Heart left ventricle (tissue), 16 donors: ENCODE measurements at regions of chr19 and their contacts with region 1.

Region 1: DNA sequence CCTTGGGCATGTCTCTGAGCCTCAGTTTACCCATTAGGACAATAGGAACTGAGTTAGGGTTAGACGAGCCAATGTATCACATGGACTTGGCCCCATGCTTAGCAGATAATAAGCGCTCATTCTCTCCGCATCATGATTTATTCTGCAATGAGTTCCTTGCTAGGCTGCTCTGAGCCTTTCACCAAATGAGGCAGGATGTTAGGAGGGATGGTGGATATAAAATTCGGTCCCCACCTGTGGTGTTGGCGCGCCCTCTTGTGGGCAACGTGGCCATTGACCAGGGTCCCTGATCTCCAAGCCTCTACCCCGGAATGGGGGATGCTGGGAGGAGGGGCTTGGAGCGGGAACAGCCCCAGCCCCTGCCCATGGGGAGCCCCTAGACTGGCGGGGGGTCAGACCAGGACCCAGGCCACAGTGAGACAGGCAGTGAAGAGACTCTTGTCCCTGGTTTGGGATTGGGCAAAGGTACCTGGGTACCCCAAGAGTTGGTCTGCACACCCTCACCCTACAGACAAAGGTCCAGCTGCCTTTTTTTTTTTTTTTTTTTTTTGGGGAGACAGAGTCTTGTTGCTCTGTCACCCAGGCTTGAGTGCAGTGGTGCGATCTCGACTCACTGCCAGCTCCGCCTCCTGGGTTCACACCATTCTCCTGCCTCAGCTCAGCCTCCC is 43.9 kb downstream of the CERS4 start:
- DNase-seq: peak; percentile 75 to 92 (median 81)
- ATAC-seq: peak in 3 of 4 donors; percentile 57 to 60 (median 59)
- H3K4me3 ChIP-seq: no peak overlapping the region
- H3K27ac ChIP-seq: no peak overlapping the region
- H3K4me1 ChIP-seq: peaks cover 0 to 18% (median 5%) of the 10 kb centered on the region in 12 donors
- H3K27me3 ChIP-seq: no peaks in the 10 kb centered on the region
- CTCF ChIP-seq: peak; percentile 90 to 98 (median 94)
- POLR2A ChIP-seq: no peak

Region 2: GRCh38 chr19:7652061-7652641 is 600.9 kb before region 1 on chr19:
- intact Hi-C with region 1: loop called in 1 of 10 experiments (anchors 5 kb)
- DNase-seq: peak; percentile 74 to 92 (median 80)
- ATAC-seq: peak; percentile 58 to 88 (median 82)
- H3K4me3 ChIP-seq: peak overlapping the region in 9 of 12 donors; percentile 16 to 42 (median 25)
- H3K27ac ChIP-seq: peak overlapping the region in 2 of 12 donors; percentile 23 to 51
- H3K4me1 ChIP-seq: peaks cover 0 to 18% (median 0%) of the 10 kb centered on the region in 12 donors
- H3K27me3 ChIP-seq: peaks cover 0 to 6% (median 0%) of the 10 kb centered on the region in 9 donors
- CTCF ChIP-seq: peak; percentile 96 to 99 (median 98)
- POLR2A ChIP-seq: no peak

Region 3: DNA sequence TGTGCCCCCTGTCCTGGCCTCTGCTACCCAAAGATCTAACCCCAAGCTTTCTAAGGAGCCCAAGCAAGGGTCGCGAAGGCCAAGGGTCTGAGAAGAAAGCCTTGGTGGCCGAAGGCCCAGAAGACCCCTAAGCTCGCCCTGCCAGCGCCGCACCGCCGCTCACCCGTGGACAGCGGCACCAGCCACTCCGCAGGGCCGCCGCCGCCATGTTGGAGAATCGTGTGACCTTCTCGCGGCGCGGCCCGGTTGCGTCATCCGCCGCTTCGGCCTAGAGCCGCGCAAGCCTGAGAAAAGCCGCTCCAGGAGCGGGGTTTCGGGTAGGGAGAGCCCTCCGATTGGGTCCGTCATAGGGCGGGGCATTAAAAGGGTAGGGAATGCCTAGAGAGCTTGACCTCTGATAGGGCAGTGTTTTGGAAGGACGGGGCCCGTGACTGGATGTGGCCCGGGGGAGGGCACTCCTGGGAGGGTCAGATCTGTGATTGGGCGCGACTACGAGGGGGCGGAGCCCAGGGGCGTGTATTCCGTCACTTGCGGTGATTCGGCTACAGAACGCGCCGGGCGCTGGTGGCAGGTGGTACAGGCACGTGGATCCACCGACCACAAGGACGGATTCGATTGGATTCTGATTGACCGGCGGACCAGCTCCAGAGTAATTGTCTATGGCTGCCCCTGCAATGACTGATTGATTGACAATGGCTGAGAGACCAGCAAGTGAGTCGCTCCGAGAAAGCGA is 309.4 kb before region 1 on chr19 and contains the start of gene TIMM44:
- intact Hi-C with region 1: loop called in 9 of 10 experiments (anchors 1 to 5 kb)
- DNase-seq: peak; percentile 99 to 100 (median 100)
- ATAC-seq: peak; percentile 98 to 100 (median 99)
- H3K4me3 ChIP-seq: peak within 1 kb of the TSS; percentile 52 to 100 (median 86)
- H3K27ac ChIP-seq: peak within 1 kb of the TSS; percentile 83 to 99 (median 94)
- H3K4me1 ChIP-seq: peaks cover 0 to 25% (median 15%) of the 10 kb centered on the region in 12 donors
- H3K27me3 ChIP-seq: no peaks in the 10 kb centered on the region
- CTCF ChIP-seq: peak in 1 of 12 donors; percentile 8
- POLR2A ChIP-seq: peak in 1 of 2 donors; percentile 85
- total RNA-seq, gene TIMM44: 55.9 to 99.9 (median 70.6) TPM

Region 4: DNA sequence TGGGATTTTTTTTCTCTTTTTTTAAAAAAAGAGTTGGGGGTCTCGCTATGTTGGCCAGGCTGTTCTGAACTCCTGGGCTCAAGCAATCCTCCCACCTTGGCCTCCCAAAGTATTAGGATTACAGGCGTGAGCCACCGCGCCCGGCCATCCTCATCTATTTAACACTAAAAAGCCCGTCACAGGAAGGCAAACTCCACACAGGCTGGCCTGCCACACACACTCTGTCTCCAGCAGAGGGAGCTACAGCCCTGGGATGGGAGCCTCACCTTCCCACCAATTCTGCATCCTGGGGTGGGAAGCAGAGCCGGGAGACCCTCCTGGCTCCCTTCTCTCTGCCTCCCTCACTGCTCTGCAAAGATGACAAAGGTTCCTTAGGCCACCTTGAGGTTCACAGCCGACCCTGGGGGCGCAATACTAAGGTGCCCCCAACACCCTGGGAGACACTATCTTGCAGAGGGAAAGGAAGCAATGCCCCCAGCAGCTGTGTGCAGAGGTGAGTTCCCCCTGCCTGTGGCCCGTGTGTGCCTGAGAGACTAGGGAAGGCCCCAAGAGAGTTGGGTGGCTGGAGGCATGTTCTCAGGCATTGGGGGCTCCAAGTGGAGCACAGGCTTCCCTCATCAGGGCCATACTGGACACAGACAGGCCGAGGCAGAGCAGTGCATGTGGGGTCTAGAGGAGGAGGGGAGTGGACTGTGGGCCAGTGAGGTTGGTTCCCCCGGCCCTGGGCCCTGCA is 282.2 kb before region 1 on chr19:
- intact Hi-C with region 1: loop called in 2 of 10 experiments (anchors 5 to 10 kb)
- DNase-seq: peak in 1 of 5 donors; percentile 48
- ATAC-seq: no peak
- H3K4me3 ChIP-seq: no peak overlapping the region
- H3K27ac ChIP-seq: no peak overlapping the region
- H3K4me1 ChIP-seq: peaks cover 0 to 30% (median 8%) of the 10 kb centered on the region in 12 donors
- H3K27me3 ChIP-seq: no peaks in the 10 kb centered on the region
- CTCF ChIP-seq: peak; percentile 57 to 78 (median 66)
- POLR2A ChIP-seq: no peak

Region 5: DNA sequence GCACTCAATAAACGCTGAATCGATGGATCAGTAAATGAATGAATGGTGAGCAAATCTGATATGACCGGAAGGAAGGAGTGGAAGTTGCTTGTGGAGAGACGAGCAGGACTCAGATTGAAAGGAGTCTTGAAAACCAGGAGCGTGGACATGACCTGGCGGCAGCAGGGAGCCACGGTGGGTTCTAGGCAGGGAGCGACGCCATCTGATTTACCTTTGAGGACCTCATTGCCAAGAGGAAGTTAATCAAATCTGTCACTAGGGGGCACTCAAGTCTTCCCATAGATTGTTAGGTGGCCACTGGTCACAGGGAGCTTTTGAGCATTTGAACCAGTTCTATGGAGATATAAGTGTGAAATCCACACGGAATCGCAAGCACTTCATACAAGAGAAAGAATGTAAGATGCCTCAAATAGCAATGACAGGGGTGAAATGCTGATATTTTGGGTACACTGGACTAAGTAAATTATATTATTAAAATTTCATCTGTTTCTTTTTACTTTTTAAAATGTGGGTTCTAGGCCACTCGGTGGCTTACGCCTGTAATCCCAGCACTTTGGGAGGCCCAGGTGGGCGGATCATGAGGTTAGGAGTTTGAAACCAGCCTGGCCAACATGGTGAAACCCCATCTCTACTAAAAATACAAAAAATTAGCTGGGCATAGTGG is 94.5 kb before region 1 on chr19:
- intact Hi-C with region 1: loop called (anchors 1 to 2 kb)
- DNase-seq: peak in 4 of 5 donors; percentile 42 to 61 (median 50)
- ATAC-seq: peak; percentile 40 to 67 (median 60)
- H3K4me3 ChIP-seq: no peak overlapping the region
- H3K27ac ChIP-seq: no peak overlapping the region
- H3K4me1 ChIP-seq: peaks cover 0 to 15% (median 9%) of the 10 kb centered on the region in 12 donors
- H3K27me3 ChIP-seq: no peaks in the 10 kb centered on the region
- CTCF ChIP-seq: peak; percentile 59 to 81 (median 75)
- POLR2A ChIP-seq: no peak

Region 6: DNA sequence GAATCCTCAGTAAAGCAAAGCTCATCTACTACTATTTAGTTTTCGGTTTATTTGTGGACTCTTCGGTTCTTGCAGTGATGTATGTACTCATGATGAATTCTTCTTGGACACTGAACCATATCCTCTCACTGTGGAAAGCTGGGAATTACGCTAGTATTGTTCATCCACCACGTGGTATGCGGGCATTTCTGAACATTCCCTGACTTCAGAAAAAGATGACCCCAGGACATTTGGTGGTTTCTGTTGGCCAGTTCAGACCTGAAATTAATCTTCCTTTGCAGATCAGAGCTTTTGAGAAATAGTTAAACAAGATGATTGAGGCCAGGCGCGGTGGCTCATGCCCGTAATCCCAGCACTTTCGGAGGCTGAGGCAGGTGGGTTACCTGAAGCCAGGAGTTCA is 78.3 kb before region 1 on chr19:
- intact Hi-C with region 1: no loop called
- DNase-seq: no peak
- ATAC-seq: no peak
- H3K4me3 ChIP-seq: no peak overlapping the region
- H3K27ac ChIP-seq: no peak overlapping the region
- H3K4me1 ChIP-seq: no peaks in the 10 kb centered on the region
- H3K27me3 ChIP-seq: no peaks in the 10 kb centered on the region
- CTCF ChIP-seq: no peak
- POLR2A ChIP-seq: no peak

Region 7: GRCh38 chr19:8240274-8241229 is 12.5 kb before region 1 on chr19:
- intact Hi-C with region 1: loop called in 1 of 10 experiments (anchors 1 kb)
- DNase-seq: peak; percentile 88 to 95 (median 92)
- ATAC-seq: peak; percentile 87 to 92 (median 90)
- H3K4me3 ChIP-seq: peak overlapping the region in 8 of 12 donors; percentile 5 to 38 (median 22)
- H3K27ac ChIP-seq: peak overlapping the region; percentile 68 to 94 (median 86)
- H3K4me1 ChIP-seq: peaks cover 4 to 38% (median 20%) of the 10 kb centered on the region in 12 donors
- H3K27me3 ChIP-seq: no peaks in the 10 kb centered on the region
- CTCF ChIP-seq: no peak
- POLR2A ChIP-seq: no peak